Mammary epithelial cell (primary cell): ENCODE measurements at regions of chr16 and their contacts with region 1.

Region 1: DNA sequence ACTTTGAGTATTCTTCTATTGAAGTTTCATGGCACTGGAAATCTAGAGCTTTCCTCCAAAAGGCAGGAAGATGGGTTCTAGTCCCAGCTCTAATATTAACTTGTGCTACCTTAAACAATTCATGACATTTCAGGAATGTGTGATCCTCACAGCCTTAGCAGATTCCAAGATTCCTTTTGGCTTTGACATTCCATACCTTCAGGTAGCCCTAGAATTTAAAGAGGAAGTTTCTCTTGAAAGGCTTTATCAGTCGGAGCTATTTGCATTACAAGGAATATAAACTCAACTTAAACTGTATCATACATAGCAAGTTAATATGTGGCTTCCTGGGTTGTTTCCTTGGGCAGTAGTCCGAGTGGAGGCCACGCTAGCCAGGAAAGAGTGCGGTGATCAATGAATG is 330.0 kb downstream of the SHISA9 start:
- DNase-seq: no peak
- H3K4me3 ChIP-seq: no peak overlapping the region
- H3K27ac ChIP-seq: no peak overlapping the region
- H3K4me1 ChIP-seq: peaks cover 17% of the 10 kb centered on the region
- H3K27me3 ChIP-seq: no peaks in the 10 kb centered on the region
- CTCF ChIP-seq: no peak

Region 2: DNA sequence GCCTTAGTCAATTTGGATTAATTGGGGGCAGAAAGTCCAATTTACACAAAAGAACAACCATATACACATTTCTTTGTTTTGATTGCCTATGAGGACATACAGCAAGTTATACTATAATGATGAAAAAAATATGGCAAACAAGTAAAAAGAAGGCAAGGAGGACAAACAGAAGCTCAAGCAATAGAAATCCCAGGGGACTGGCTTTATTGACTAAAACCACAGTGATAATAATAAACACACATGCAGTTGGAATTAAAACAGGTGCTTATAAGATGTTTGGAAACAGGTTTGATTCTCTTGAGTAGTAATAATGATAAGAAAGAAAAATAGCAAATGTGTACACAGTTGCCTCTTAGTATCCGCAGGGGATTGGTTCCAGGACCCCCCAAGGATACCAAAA is 153.5 kb before region 1 on chr16:
- CTCF ChIA-PET with region 1: no interaction called
- dilution Hi-C with region 1: no loop called
- in situ Hi-C with region 1: no loop called
- intact Hi-C with region 1: no loop called
- DNase-seq: no peak
- H3K4me3 ChIP-seq: no peak overlapping the region
- H3K27ac ChIP-seq: no peak overlapping the region
- H3K4me1 ChIP-seq: no peaks in the 10 kb centered on the region
- H3K27me3 ChIP-seq: no peaks in the 10 kb centered on the region
- CTCF ChIP-seq: no peak

Region 3: DNA sequence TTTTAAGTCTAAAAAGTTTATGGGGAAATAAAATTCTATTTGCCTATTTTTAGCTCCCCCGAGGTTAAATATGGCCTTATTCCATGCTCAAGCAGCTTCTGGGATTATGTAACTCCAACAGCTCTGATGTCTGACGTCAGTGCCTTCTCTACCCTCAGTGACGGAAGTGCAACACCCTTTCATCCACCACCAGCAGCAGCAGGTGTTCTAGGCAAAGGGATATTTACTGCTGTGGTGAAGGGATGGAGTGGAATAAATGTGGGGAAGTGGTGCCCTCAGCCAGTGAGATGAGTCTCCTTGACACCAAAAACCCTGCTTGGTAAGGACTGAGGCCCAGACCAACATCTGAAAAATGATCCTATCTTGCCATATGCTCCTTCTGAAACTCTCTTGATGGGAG is 82.5 kb before region 1 on chr16:
- CTCF ChIA-PET with region 1: no interaction called
- dilution Hi-C with region 1: no loop called
- in situ Hi-C with region 1: no loop called
- intact Hi-C with region 1: no loop called
- DNase-seq: no peak
- H3K4me3 ChIP-seq: no peak overlapping the region
- H3K27ac ChIP-seq: no peak overlapping the region
- H3K4me1 ChIP-seq: peaks cover 15% of the 10 kb centered on the region
- H3K27me3 ChIP-seq: no peaks in the 10 kb centered on the region
- CTCF ChIP-seq: no peak

Region 4: GRCh38 chr16:13176711-13177110 is 54.7 kb before region 1 on chr16:
- CTCF ChIA-PET with region 1: no interaction called
- dilution Hi-C with region 1: no loop called
- in situ Hi-C with region 1: loop called in 1 of 2 experiments (anchors 10 kb)
- intact Hi-C with region 1: no loop called
- DNase-seq: peak; percentile 45
- H3K4me3 ChIP-seq: no peak overlapping the region
- H3K27ac ChIP-seq: peak overlapping the region; percentile 27
- H3K4me1 ChIP-seq: peaks cover 11% of the 10 kb centered on the region
- H3K27me3 ChIP-seq: no peaks in the 10 kb centered on the region
- CTCF ChIP-seq: no peak

Region 5: DNA sequence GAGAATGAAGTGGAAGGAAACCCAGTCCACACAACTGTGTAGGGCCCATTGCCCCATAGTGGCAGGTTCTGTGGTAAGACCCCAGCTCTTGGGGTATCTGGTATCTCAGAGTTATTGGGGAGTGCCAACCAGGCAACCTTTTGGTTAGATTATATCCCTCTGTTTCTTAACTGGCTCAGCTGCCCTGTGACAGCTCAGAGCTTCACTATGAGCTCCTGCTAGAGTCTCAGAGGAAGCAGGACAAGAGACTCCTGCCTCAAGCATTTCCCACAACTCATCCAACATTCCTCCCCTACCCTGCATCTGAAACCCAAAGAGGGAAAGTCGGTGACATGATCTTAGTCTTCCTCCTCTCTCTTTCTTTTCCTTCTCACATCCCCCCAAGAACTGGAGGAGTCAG is 37.6 kb before region 1 on chr16:
- CTCF ChIA-PET with region 1: no interaction called
- dilution Hi-C with region 1: loop called (anchors 5 kb)
- in situ Hi-C with region 1: no loop called
- intact Hi-C with region 1: no loop called
- DNase-seq: no peak
- H3K4me3 ChIP-seq: no peak overlapping the region
- H3K27ac ChIP-seq: no peak overlapping the region
- H3K4me1 ChIP-seq: peaks cover 4% of the 10 kb centered on the region
- H3K27me3 ChIP-seq: no peaks in the 10 kb centered on the region
- CTCF ChIP-seq: no peak

Region 6: GRCh38 chr16:13331919-13332318 is 100.6 kb after region 1 on chr16:
- CTCF ChIA-PET with region 1: no interaction called
- dilution Hi-C with region 1: no loop called
- in situ Hi-C with region 1: no loop called
- intact Hi-C with region 1: no loop called
- DNase-seq: no peak
- H3K4me3 ChIP-seq: no peak overlapping the region
- H3K27ac ChIP-seq: no peak overlapping the region
- H3K4me1 ChIP-seq: no peaks in the 10 kb centered on the region
- H3K27me3 ChIP-seq: no peaks in the 10 kb centered on the region
- CTCF ChIP-seq: no peak

Region 7: GRCh38 chr16:13542284-13542683 is 310.9 kb after region 1 on chr16:
- CTCF ChIA-PET with region 1: no interaction called
- dilution Hi-C with region 1: no loop called
- in situ Hi-C with region 1: no loop called
- intact Hi-C with region 1: no loop called
- DNase-seq: no peak
- H3K4me3 ChIP-seq: no peak overlapping the region
- H3K27ac ChIP-seq: no peak overlapping the region
- H3K4me1 ChIP-seq: no peaks in the 10 kb centered on the region
- H3K27me3 ChIP-seq: no peaks in the 10 kb centered on the region
- CTCF ChIP-seq: no peak